AG04449 (cell line): ENCODE measurements at regions of chr12 and their contacts with region 1.

Region 1: GRCh38 chr12:9699898-9700605 is 30.5 kb downstream of the CLEC2D start:
- DNase-seq: no peak
- H3K4me3 ChIP-seq: no peak overlapping the region
- CTCF ChIP-seq: no peak

Region 2: DNA sequence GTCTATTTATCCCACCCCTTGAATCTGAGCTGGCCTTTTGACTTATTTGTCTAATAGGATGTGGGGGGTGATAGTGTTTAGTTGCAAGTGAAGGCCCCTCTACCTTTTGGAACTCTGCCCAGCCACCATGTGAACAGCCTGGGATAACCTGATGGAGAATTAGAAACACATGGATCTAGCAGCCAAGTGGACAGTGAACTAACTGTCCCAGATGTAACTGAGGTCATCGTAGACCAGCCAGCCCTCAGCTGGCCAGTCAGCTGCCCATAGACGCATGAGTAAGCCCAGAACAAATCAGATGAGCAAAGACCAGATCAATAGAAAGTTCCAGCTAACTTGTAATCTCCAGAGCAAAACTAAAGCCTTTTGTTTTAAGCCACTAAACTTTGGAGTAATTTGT is 111.3 kb before region 1 on chr12:
- CTCF ChIA-PET with region 1: no interaction called
- POLR2A ChIA-PET with region 1: no interaction called
- DNase-seq: no peak
- H3K4me3 ChIP-seq: no peak overlapping the region
- CTCF ChIP-seq: no peak

Region 3: GRCh38 chr12:9640024-9640423 is 60.0 kb before region 1 on chr12:
- CTCF ChIA-PET with region 1: interaction called, 10 read pairs
- POLR2A ChIA-PET with region 1: no interaction called
- DNase-seq: no peak
- H3K4me3 ChIP-seq: no peak overlapping the region
- CTCF ChIP-seq: no peak

Region 4: GRCh38 chr12:9731797-9732196 is 31.7 kb after region 1 on chr12:
- CTCF ChIA-PET with region 1: no interaction called
- POLR2A ChIA-PET with region 1: no interaction called
- DNase-seq: no peak
- H3K4me3 ChIP-seq: no peak overlapping the region
- CTCF ChIP-seq: no peak

Region 5: GRCh38 chr12:9776778-9777177 is 76.7 kb after region 1 on chr12:
- CTCF ChIA-PET with region 1: no interaction called
- POLR2A ChIA-PET with region 1: no interaction called
- DNase-seq: no peak
- H3K4me3 ChIP-seq: no peak overlapping the region
- CTCF ChIP-seq: no peak